WTC11 (cell line): ENCODE measurements at regions of chr1 and their contacts with region 1.

Region 1: GRCh38 chr1:156193488-156194299 is at the start of gene SLC25A44:
- DNase-seq: peak; percentile 97
- ATAC-seq: peak; percentile 98
- H3K4me3 Mint-ChIP-seq: peak within 1 kb of the TSS; percentile 99
- H3K27ac Mint-ChIP-seq: peak within 1 kb of the TSS; percentile 98
- H3K4me1 Mint-ChIP-seq: peaks cover 35% of the 10 kb centered on the region
- H3K27me3 Mint-ChIP-seq: no peaks in the 10 kb centered on the region
- CTCF ChIP-seq: peak; percentile 37
- total RNA-seq, gene SLC25A44: 17.9 to 29.1 TPM (median 19.7 TPM) in 3 replicates

Region 2: DNA sequence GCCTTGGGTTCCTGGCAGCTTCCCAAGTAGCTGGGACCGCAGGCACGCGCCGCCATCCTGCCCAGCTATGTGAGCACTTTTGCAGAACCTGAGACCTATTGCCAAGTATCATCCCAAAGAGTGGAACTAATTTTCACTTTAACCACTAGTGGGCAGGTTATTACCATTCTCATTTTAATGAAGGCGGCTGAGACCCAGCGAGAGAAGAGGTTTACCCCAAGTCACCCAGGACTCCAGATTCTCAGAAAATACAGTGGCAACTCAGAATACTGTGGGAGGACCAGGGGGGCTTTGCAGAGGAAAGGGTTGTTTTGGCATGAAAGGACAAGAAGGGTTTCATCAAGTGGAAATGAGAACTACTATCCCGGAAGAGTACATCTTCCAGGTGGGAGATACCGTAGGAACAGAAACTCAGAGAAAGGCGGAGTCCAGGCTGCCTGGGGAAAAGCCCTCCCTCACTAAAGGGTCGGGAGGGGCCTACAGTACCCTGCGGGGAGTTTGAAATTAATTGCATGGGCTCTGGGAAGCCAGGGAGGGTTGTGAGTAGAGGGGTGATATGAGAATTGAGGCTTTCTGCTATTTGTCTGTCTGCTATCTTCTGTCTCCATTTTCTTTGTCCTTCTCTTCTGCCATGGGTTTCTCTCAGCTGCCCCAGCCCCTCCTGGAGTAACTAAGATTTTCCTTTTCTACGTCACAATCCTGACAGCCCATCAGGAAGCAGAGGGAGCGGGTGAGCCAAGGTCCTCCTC is 47.5 kb before region 1 on chr1:
- CTCF ChIA-PET with region 1: interaction called, 22 read pairs
- POLR2A ChIA-PET with region 1: interaction called, 7 read pairs
- DNase-seq: no peak
- ATAC-seq: peak; percentile 12
- H3K4me3 Mint-ChIP-seq: peak overlapping the region; percentile 58
- H3K27ac Mint-ChIP-seq: peak overlapping the region; percentile 87
- H3K4me1 Mint-ChIP-seq: peaks cover 53% of the 10 kb centered on the region
- H3K27me3 Mint-ChIP-seq: no peaks in the 10 kb centered on the region; the same call in 1 of the 2 replicates
- CTCF ChIP-seq: peak; percentile 27; the same call in 1 of the 2 replicates

Region 3: GRCh38 chr1:156212833-156213643 is 19.3 kb after region 1 on chr1 and contains the start of gene PMF1:
- CTCF ChIA-PET with region 1: interaction called, 26 read pairs
- POLR2A ChIA-PET with region 1: interaction called, 10 read pairs
- DNase-seq: peak; percentile 97
- ATAC-seq: peak; percentile 95
- H3K4me3 Mint-ChIP-seq: peak within 1 kb of the TSS; percentile 94
- H3K27ac Mint-ChIP-seq: peak within 1 kb of the TSS; percentile 99
- H3K4me1 Mint-ChIP-seq: peaks cover 27% of the 10 kb centered on the region
- H3K27me3 Mint-ChIP-seq: no peaks in the 10 kb centered on the region
- CTCF ChIP-seq: no peak
- total RNA-seq, gene PMF1: 112 to 129 TPM (median 115 TPM) in 3 replicates

Region 4: GRCh38 chr1:156233426-156234127 is 39.9 kb after region 1 on chr1:
- CTCF ChIA-PET with region 1: no interaction called
- POLR2A ChIA-PET with region 1: interaction called, 12 read pairs
- DNase-seq: no peak
- ATAC-seq: no peak
- H3K4me3 Mint-ChIP-seq: no peak overlapping the region
- H3K27ac Mint-ChIP-seq: no peak overlapping the region
- H3K4me1 Mint-ChIP-seq: no peaks in the 10 kb centered on the region
- H3K27me3 Mint-ChIP-seq: no peaks in the 10 kb centered on the region
- CTCF ChIP-seq: no peak

Region 5: DNA sequence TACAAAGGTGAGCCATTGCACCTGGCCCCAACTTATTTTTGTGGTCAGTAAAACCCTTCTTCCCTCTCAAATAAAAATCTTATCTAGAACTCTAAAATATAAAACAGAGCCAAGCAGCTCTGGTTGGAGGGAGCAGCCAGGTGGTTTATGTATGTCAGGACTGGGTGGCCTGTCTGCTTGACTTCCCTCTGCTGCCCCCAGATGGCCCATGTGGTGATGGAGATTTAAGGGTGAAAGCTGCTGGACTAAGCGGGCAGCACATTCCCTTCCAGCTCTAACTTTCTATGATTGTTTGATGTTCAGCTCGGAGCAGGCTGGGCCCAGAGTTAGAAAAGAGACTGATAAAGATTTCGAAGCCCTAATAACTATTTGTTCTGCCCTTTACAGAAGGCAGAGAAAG is 66.1 kb after region 1 on chr1:
- CTCF ChIA-PET with region 1: no interaction called
- POLR2A ChIA-PET with region 1: no interaction called
- DNase-seq: no peak
- ATAC-seq: peak; percentile 52
- H3K4me3 Mint-ChIP-seq: no peak overlapping the region
- H3K27ac Mint-ChIP-seq: no peak overlapping the region
- H3K4me1 Mint-ChIP-seq: no peaks in the 10 kb centered on the region
- H3K27me3 Mint-ChIP-seq: no peaks in the 10 kb centered on the region
- CTCF ChIP-seq: no peak